ENCODE measurements at regions of chr16 and their contacts with region 1.

Region 1: GRCh38 chr16:21656795-21657768 is 4.7 kb upstream of the IGSF6 start:
- DNase-seq: no peak
- H3K4me3 ChIP-seq: no peak overlapping the region
- H3K27ac ChIP-seq: no peak overlapping the region
- H3K27me3 ChIP-seq: no peaks in the 10 kb centered on the region
- CTCF ChIP-seq: peak; percentile 88

Region 2: GRCh38 chr16:21194771-21195301 is 462.2 kb before region 1 on chr16:
- CTCF ChIA-PET with region 1: no interaction called
- POLR2A ChIA-PET with region 1: no interaction called
- DNase-seq: no peak
- H3K4me3 ChIP-seq: no peak overlapping the region
- H3K27ac ChIP-seq: no peak overlapping the region
- H3K27me3 ChIP-seq: peaks cover 18% of the 10 kb centered on the region
- CTCF ChIP-seq: no peak

Region 3: GRCh38 chr16:21590287-21590686 is 66.8 kb before region 1 on chr16:
- CTCF ChIA-PET with region 1: interaction called, 12 read pairs
- POLR2A ChIA-PET with region 1: no interaction called
- DNase-seq: no peak
- H3K4me3 ChIP-seq: no peak overlapping the region
- H3K27ac ChIP-seq: no peak overlapping the region
- H3K27me3 ChIP-seq: peaks cover 3% of the 10 kb centered on the region
- CTCF ChIP-seq: no peak

Region 4: GRCh38 chr16:21611546-21612384 is 45.3 kb before region 1 on chr16:
- CTCF ChIA-PET with region 1: interaction called, 20 read pairs
- POLR2A ChIA-PET with region 1: no interaction called
- DNase-seq: no peak
- H3K4me3 ChIP-seq: no peak overlapping the region
- H3K27ac ChIP-seq: peak overlapping the region; percentile 42
- H3K27me3 ChIP-seq: no peaks in the 10 kb centered on the region
- CTCF ChIP-seq: no peak

Region 5: DNA sequence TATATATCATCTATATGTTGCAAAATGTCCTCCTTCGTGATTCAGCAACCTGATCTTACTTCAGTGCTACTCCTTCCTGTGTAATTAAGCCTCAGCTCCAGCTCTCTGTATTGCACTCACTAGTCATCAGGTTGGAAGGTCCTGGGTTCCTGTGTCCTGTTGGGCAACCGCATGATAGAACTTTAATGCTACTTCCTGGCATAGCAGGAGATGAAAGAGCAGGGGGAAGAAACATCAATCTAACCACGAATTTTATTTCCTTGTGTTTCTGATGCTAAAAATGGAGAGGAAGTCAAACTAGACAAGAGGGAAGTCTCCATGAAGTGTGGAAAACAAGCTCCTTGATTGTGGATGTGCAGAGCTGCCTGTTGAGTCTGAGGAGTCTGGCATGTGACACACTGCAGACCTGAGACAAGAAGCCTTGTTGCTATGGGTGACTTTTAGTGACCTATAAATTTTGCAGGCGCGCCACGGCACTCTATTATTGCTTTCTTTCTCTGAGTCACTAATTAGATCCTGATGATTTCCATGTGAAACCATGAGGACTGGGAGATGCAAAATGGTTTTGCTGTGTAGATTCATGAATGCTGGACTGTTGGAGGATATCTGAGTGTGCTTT is 30.3 kb before region 1 on chr16:
- CTCF ChIA-PET with region 1: interaction called, 28 read pairs
- POLR2A ChIA-PET with region 1: no interaction called
- DNase-seq: peak; percentile 42
- H3K4me3 ChIP-seq: no peak overlapping the region; the same call in 1 of the 2 replicates
- H3K27ac ChIP-seq: peak overlapping the region; percentile 85
- H3K27me3 ChIP-seq: no peaks in the 10 kb centered on the region
- CTCF ChIP-seq: no peak

Region 6: GRCh38 chr16:21698169-21699032 is 41.3 kb after region 1 on chr16:
- CTCF ChIA-PET with region 1: interaction called, 24 read pairs
- POLR2A ChIA-PET with region 1: no interaction called
- DNase-seq: no peak
- H3K4me3 ChIP-seq: no peak overlapping the region
- H3K27ac ChIP-seq: no peak overlapping the region
- H3K27me3 ChIP-seq: peaks cover 7% of the 10 kb centered on the region
- CTCF ChIP-seq: no peak

Measured in AG04450 (cell line).